GM10248 (cell line): ENCODE measurements at regions of chr10 and their contacts with region 1.

Region 1: GRCh38 chr10:128211953-128212727 is 85.9 kb upstream of the MKI67 start:
- DNase-seq: peak; percentile 93
- CTCF ChIP-seq: peak; percentile 93

Region 2: GRCh38 chr10:128026614-128027300 is 185.4 kb before region 1 on chr10:
- CTCF ChIA-PET with region 1: no interaction called
- POLR2A ChIA-PET with region 1: no interaction called
- DNase-seq: no peak
- CTCF ChIP-seq: no peak

Region 3: GRCh38 chr10:128222332-128222849 is 10.3 kb after region 1 on chr10:
- CTCF ChIA-PET with region 1: interaction called, 15 read pairs
- POLR2A ChIA-PET with region 1: no interaction called
- DNase-seq: no peak
- CTCF ChIP-seq: no peak

Region 4: DNA sequence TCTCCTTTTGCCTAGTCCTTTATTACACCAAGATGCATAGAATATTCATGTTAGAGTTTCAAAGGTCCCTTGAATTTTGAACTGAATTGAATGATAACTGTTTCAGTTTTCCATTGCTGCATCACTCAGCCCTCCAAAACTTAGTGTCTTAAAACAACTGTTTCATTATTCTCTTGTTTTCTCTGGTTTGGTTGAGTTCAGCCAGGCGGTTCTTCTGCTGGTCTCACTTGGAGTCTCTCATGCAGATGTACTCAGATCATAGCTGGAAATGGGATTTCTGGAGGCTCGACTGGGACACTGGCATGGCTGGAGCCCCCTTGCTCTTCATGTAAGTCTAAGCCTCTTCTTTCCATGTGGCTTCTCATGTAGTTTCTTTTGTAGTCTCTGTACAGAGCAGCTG is 21.3 kb after region 1 on chr10:
- CTCF ChIA-PET with region 1: interaction called, 12 read pairs
- POLR2A ChIA-PET with region 1: no interaction called
- DNase-seq: no peak
- CTCF ChIP-seq: no peak

Region 5: GRCh38 chr10:128557149-128557710 is 345.1 kb after region 1 on chr10:
- CTCF ChIA-PET with region 1: no interaction called
- POLR2A ChIA-PET with region 1: no interaction called
- DNase-seq: no peak
- CTCF ChIP-seq: no peak